Naive thymus-derived CD4-positive, alpha-beta T cell (primary cell): ENCODE measurements at regions of chr17 and their contacts with region 1.

Region 1: DNA sequence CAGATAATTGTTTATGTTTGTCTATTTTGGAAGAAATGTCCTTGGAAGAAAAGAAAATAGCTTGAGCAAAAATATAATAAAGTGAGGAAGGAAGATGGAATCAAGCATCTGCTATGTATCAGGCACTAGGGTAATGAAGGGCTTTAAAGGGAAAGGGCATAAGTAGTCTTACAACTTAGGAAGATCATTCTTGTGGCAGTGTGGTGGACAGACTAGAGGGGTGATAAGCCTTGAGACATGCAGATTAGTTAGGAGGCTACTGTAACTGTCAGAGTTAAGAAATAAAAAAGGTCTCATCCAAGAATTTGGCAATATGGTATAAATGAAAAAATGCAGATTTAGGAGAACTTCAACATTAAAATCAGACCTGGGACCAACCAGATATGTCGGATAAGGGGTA is 14.9 kb downstream of the FAM222B start:
- DNase-seq: no peak
- ATAC-seq: no peak
- H3K4me3 ChIP-seq: no peak overlapping the region
- H3K4me3 Mint-ChIP-seq: no peak overlapping the region
- H3K27ac ChIP-seq: no peak overlapping the region
- H3K27ac Mint-ChIP-seq: peak overlapping the region in 4 of 9 donors; percentile 32 to 59 (median 48)
- H3K4me1 ChIP-seq: no peaks in the 10 kb centered on the region
- H3K4me1 Mint-ChIP-seq: peaks cover 10 to 29% (median 14%) of the 10 kb centered on the region in 7 donors
- H3K27me3 ChIP-seq: no peaks in the 10 kb centered on the region
- H3K27me3 Mint-ChIP-seq: no peaks in the 10 kb centered on the region

Region 2: GRCh38 chr17:28644985-28645939 is 182.4 kb before region 1 on chr17 and contains the start of gene BLTP2:
- CTCF ChIA-PET with region 1: no interaction called
- POLR2A ChIA-PET with region 1: no interaction called
- intact Hi-C with region 1: no loop called
- DNase-seq: peak; percentile 86 to 95 (median 93)
- ATAC-seq: peak; percentile 99
- H3K4me3 ChIP-seq: peak within 1 kb of the TSS; percentile 87
- H3K4me3 Mint-ChIP-seq: peak within 1 kb of the TSS; percentile 89 to 99 (median 94)
- H3K27ac ChIP-seq: peak within 1 kb of the TSS; percentile 95
- H3K27ac Mint-ChIP-seq: peak within 1 kb of the TSS; percentile 90 to 99 (median 97)
- H3K4me1 ChIP-seq: peaks cover 26 to 29% of the 10 kb centered on the region in 2 donors
- H3K4me1 Mint-ChIP-seq: peaks cover 29 to 57% (median 39%) of the 10 kb centered on the region in 7 donors
- H3K27me3 ChIP-seq: no peaks in the 10 kb centered on the region
- H3K27me3 Mint-ChIP-seq: no peaks in the 10 kb centered on the region
- total RNA-seq, gene BLTP2: 143 to 163 (median 153) TPM

Region 3: GRCh38 chr17:28842282-28843012 is 14.8 kb after region 1 on chr17 and contains the start of gene FAM222B:
- CTCF ChIA-PET with region 1: no interaction called
- POLR2A ChIA-PET with region 1: interaction called, 10 read pairs
- intact Hi-C with region 1: no loop called
- DNase-seq: peak; percentile 80 to 91 (median 86)
- ATAC-seq: peak; percentile 98
- H3K4me3 ChIP-seq: peak within 1 kb of the TSS; percentile 77
- H3K4me3 Mint-ChIP-seq: peak within 1 kb of the TSS; percentile 96 to 100 (median 98)
- H3K27ac ChIP-seq: peak within 1 kb of the TSS; percentile 78
- H3K27ac Mint-ChIP-seq: peak within 1 kb of the TSS; percentile 83 to 97 (median 92)
- H3K4me1 ChIP-seq: peaks cover 8 to 13% of the 10 kb centered on the region in 2 donors
- H3K4me1 Mint-ChIP-seq: peaks cover 6 to 31% (median 26%) of the 10 kb centered on the region in 7 donors
- H3K27me3 ChIP-seq: no peaks in the 10 kb centered on the region
- H3K27me3 Mint-ChIP-seq: no peaks in the 10 kb centered on the region
- total RNA-seq, gene FAM222B: 16.5 to 24.4 (median 22.3) TPM